AG04449 (cell line): ENCODE measurements at regions of chr22 and their contacts with region 1.

Region 1: DNA sequence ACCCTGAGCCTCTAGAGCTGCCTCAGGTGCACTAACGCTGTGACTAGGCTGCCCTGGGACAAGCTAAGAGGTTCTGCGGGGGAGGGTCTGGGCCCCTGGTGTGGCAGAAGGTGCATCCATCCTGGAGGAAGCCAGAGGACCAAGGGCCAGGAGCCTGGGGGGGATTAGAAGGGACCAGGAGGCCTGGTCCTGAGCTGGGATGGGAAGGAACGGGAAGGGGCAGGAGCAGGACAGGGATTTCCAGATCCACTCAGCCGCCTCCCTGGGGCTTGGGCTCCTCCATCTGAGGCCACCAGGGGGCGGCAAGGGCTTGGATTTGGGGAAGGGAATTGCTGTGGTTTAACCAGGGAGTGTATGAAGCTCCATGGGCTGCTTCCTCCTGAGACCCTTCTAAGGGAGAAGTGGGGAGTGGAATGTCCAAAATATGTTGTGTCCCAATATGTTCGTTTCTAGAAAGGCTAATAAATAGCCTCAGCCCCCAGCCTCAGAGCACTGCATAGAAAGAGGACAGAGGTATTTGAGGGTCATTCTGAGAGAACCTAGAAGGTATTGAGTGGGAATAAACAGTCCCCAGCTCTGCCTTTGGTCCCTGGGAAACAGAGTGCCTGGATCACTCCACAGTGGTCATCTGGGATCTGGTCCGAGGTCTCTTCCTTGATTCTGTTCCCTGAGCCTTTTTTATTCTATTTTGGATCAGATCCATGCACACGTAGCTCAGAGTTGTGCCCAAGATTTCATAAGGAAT is 17.4 kb upstream of the PRAME start:
- DNase-seq: no peak
- H3K4me3 ChIP-seq: no peak overlapping the region
- CTCF ChIP-seq: peak; percentile 87

Region 2: GRCh38 chr22:22463855-22464540 is 112.4 kb before region 1 on chr22:
- CTCF ChIA-PET with region 1: interaction called, 14 read pairs
- POLR2A ChIA-PET with region 1: no interaction called
- DNase-seq: no peak
- H3K4me3 ChIP-seq: no peak overlapping the region
- CTCF ChIP-seq: peak; percentile 49

Region 3: DNA sequence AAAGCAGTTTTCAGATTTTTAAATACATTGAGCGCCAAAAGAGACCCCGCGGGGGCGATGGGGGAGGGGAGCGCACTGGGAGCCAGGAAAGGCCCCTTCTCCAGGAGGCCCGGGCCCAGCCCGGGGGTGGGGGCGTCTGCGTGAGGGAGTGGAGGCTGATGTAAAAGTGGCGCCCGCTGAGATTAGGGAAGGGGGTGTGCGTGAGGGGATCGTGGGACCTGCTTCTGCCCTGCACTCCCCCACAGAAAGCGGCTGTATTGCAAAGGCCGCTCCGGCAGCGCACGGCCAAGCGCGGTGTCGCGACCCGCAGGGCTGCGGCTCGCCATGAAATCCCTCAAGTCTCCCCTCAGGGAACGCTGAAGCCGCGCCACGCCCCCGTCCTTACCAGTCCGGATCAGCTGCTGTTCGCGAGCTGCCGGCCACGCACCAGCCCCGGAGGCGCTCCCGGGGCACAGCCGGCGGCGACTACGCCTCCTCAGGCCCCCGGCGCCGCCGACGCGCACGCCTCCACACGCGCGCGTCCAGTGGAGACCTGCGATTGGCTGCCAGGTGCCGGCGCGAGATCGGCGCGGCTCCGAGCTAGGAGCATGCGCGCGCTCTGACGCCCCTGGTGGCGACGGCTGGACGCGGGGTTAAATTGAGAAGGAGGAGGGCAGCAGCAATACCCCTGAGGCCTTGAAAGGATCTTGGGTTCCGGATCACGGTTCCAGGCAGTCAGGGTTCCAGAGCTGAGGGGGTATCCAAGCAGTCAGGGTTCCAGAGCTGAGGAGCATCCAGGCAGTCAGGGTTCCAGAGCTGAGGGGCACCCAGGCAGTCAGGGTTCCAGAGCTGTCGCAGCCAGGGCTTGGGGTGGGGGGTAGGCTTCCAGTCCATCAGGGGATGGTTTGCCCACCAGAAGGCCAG is 67.9 kb before region 1 on chr22 and contains the start of gene ZNF280B:
- CTCF ChIA-PET with region 1: interaction called, 11 read pairs
- POLR2A ChIA-PET with region 1: no interaction called
- DNase-seq: peak; percentile 9
- H3K4me3 ChIP-seq: peak within 1 kb of the TSS; percentile 85
- CTCF ChIP-seq: peak; percentile 93

Region 4: DNA sequence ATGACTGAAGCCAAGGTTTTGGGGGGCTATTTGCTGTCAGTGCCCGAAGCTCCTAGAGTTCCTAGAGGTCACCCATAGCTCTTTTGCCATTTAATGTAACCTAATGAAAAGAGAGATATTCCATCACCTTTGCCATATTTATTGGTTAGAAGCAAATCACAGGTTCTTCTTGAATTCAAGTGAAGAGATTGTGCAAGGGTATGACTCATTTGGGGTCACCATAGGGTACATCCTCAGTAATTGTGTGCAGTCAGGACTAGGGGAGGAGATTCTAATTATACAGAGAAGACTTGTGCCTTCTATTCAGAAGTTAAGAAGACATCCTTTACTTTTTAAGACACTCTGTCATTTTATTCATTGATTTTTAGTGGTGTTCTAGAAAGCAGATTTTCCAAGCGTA is 10.4 kb before region 1 on chr22:
- CTCF ChIA-PET with region 1: interaction called, 25 read pairs
- POLR2A ChIA-PET with region 1: no interaction called
- DNase-seq: no peak
- H3K4me3 ChIP-seq: no peak overlapping the region
- CTCF ChIP-seq: no peak

Region 5: GRCh38 chr22:22587577-22588188 is 11.3 kb after region 1 on chr22:
- CTCF ChIA-PET with region 1: interaction called, 80 read pairs
- POLR2A ChIA-PET with region 1: no interaction called
- DNase-seq: no peak
- H3K4me3 ChIP-seq: no peak overlapping the region
- CTCF ChIP-seq: no peak

Region 6: DNA sequence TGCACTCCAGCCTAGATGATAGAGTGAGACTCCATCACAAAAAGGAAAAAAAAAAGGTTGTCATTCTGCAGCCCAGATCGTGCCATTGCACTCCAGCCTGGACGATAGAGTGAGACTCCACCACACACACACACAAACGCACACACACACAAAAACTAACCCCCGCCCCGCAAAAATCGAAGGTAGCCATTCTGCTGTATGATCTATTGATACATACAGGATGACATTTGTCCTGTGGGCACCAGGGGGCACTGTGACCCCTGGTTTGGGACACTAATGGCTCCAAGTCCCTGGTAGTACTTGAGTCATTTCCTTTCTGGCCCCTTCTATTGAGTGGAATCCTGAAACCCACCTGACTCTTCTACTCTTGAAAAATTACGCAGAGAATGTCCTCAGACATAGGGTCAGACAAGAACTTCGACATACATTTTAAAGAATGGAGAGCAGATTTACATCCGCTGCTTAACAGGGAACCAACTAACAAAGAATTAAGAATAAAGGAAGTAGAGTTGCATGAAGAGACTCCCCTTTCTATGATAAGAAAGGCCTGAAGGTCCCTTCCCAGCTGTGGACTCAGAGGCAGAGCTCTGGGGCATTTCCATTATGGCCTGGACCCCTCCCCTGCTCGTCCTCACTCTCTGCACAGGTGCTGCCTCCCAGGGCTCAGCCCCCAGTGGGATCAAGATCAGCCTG is 17.7 kb after region 1 on chr22:
- CTCF ChIA-PET with region 1: interaction called, 80 read pairs
- POLR2A ChIA-PET with region 1: no interaction called
- DNase-seq: no peak
- H3K4me3 ChIP-seq: no peak overlapping the region
- CTCF ChIP-seq: peak; percentile 56